ENCODE measurements at regions of chr1 and their contacts with region 1.

Region 1: DNA sequence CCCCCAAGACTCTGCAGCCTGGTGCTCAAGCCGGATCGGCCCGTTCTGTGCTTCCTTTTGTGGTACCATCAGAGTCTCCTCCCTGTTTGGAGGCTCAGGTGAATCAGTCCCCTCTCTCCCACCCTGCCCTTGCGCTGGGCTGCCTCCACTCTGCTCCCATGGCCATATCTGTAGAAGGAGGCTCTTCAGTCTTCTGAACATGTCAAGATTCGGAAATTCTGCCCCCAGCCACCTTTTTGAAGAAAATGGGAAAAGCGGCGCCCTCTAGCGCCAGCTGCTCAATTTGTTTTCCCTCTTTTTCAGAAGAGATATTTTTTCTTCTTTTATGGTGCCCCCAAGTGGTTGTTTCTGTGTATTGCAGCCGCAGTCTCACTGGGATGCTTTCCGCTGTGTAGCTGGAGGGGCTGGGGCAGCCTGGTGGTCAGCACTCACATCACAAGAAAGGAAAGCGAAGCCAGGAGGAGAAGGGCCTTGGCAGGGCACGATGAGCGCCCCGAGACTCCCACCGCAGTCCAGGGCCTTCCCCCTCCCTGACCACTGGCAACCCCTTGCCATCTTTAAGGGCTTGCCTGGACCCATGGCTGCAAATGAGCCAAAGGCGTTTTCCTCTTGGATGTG is 58.4 kb upstream of the CACNA1E start:
- DNase-seq: peak; percentile 67
- H3K4me3 ChIP-seq: no peak overlapping the region
- H3K27ac ChIP-seq: no peak overlapping the region
- H3K4me1 ChIP-seq: no peaks in the 10 kb centered on the region
- H3K27me3 ChIP-seq: peaks cover 2% of the 10 kb centered on the region
- CTCF ChIP-seq: peak; percentile 93 to 97 (median 95)
- POLR2A ChIP-seq: no peak

Region 2: GRCh38 chr1:181189691-181190363 is 235.1 kb before region 1 on chr1:
- intact Hi-C with region 1: loop called (anchors 1 kb)
- DNase-seq: peak; percentile 49
- H3K4me3 ChIP-seq: peak overlapping the region in 1 of 2 donors; percentile 15
- H3K27ac ChIP-seq: no peak overlapping the region
- H3K4me1 ChIP-seq: no peaks in the 10 kb centered on the region
- H3K27me3 ChIP-seq: no peaks in the 10 kb centered on the region
- CTCF ChIP-seq: peak; percentile 93 to 97 (median 96)
- POLR2A ChIP-seq: no peak